ENCODE measurements at regions of chrX and their contacts with region 1.

Region 1: GRCh38 chrX:23901805-23902204 is 5.9 kb downstream of the APOO start:
- DNase-seq: peak; percentile 81
- H3K4me3 ChIP-seq: no peak overlapping the region
- H3K27ac ChIP-seq: peak overlapping the region; percentile 90
- H3K4me1 ChIP-seq: peaks cover 48% of the 10 kb centered on the region
- H3K27me3 ChIP-seq: no peaks in the 10 kb centered on the region
- CTCF ChIP-seq: peak; percentile 32 to 51
- POLR2A ChIP-seq: no peak

Region 2: DNA sequence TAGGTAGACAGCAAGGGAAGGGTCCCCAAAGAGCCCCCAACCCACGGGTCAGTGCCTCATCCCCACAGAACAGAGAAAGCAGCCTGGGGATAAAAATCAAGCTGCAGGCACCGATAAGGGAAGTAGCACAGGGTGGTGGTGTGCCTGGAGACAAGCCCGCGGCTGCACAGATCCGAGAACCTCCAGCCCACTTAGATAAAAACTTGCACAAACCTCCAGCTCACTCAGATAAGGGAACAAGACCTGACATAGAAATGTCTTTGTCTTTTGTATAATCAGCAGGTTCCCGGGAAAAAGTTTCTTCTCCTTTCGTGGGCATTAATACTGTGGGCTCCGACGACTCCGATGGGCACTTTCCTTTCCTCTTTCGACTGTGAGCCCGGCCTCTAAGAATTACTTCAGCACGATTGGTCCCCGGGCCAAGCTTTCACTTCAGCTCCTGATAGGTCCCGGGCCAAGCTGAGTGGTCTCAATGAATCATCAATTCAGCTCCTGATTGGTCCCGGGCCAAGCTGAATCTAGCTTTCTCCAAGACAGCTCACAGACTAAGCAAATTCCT is 202.1 kb before region 1 on chrX:
- CTCF ChIA-PET with region 1: interaction called, 85 read pairs
- POLR2A ChIA-PET with region 1: no interaction called
- dilution Hi-C with region 1: no loop called
- intact Hi-C with region 1: loop called (anchors 1 kb)
- DNase-seq: no peak
- H3K4me3 ChIP-seq: no peak overlapping the region
- H3K27ac ChIP-seq: no peak overlapping the region
- H3K4me1 ChIP-seq: no peaks in the 10 kb centered on the region
- H3K27me3 ChIP-seq: no peaks in the 10 kb centered on the region
- CTCF ChIP-seq: no peak
- POLR2A ChIP-seq: no peak

Region 3: GRCh38 chrX:23726191-23726590 is 175.6 kb before region 1 on chrX:
- CTCF ChIA-PET with region 1: interaction called, 11 read pairs
- POLR2A ChIA-PET with region 1: no interaction called
- dilution Hi-C with region 1: no loop called
- intact Hi-C with region 1: no loop called
- DNase-seq: no peak
- H3K4me3 ChIP-seq: no peak overlapping the region
- H3K27ac ChIP-seq: no peak overlapping the region
- H3K4me1 ChIP-seq: peaks cover 10% of the 10 kb centered on the region
- H3K27me3 ChIP-seq: no peaks in the 10 kb centered on the region
- CTCF ChIP-seq: no peak
- POLR2A ChIP-seq: no peak

Region 4: DNA sequence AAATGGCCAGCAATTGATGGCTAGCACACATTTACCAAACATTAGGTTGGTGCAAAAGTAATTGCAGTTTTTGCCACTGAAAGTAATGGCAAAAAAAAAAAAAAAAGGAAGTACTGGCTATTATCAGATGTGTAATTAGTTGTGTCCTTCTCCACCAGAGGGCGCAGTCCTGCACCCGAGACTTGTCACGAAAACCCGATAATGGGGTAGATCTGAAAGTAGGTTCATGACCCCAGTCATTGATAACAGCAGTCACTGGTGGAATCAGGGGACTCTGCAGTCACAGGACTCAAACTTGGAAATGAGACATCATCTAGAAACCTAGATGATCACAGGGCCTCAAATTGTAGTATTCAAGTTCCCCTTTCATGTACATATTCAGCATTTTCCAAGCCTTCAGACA is 145.6 kb before region 1 on chrX:
- CTCF ChIA-PET with region 1: interaction called, 28 read pairs
- POLR2A ChIA-PET with region 1: no interaction called
- dilution Hi-C with region 1: no loop called
- intact Hi-C with region 1: loop called (anchors 1 kb)
- DNase-seq: peak; percentile 54
- H3K4me3 ChIP-seq: no peak overlapping the region
- H3K27ac ChIP-seq: no peak overlapping the region
- H3K4me1 ChIP-seq: no peaks in the 10 kb centered on the region
- H3K27me3 ChIP-seq: no peaks in the 10 kb centered on the region
- CTCF ChIP-seq: peak; percentile 32 to 34
- POLR2A ChIP-seq: no peak

Region 5: DNA sequence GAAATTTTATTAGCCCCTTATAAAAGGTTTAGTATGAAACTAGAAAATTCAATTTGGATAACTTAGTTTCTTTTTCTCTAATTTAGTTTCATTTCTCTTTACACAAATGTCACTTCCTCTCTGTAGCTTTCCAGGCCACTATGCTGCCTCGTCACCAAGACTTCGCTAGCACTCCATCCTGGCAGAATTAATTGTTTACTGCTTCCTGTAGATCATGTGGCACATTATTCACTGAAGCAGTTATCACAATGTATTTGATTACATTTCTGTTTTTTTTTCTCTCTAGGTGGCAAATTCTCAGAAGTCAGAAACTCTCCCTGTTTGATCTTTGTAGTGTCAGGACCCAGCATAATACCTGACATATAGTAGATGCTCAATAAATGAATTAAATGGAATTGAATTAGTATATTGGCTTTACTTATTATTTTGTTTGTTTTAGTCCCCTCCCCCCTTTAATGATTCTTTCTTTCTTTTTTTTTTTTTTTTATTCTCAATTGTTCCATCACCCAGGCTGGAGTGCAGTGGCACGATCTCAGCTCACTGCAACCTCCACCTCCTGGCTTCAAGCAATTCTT is 128.1 kb before region 1 on chrX:
- CTCF ChIA-PET with region 1: interaction called, 18 read pairs
- POLR2A ChIA-PET with region 1: no interaction called
- dilution Hi-C with region 1: no loop called
- intact Hi-C with region 1: no loop called
- DNase-seq: peak; percentile 76
- H3K4me3 ChIP-seq: no peak overlapping the region
- H3K27ac ChIP-seq: peak overlapping the region; percentile 82
- H3K4me1 ChIP-seq: peaks cover 4% of the 10 kb centered on the region
- H3K27me3 ChIP-seq: no peaks in the 10 kb centered on the region
- CTCF ChIP-seq: no peak
- POLR2A ChIP-seq: no peak

Region 6: GRCh38 chrX:23803931-23804381 is 97.8 kb before region 1 on chrX:
- CTCF ChIA-PET with region 1: interaction called, 17 read pairs
- POLR2A ChIA-PET with region 1: interaction called, 3 read pairs
- dilution Hi-C with region 1: no loop called
- intact Hi-C with region 1: loop called (anchors 1 kb)
- DNase-seq: peak; percentile 86
- H3K4me3 ChIP-seq: no peak overlapping the region
- H3K27ac ChIP-seq: peak overlapping the region; percentile 74
- H3K4me1 ChIP-seq: peaks cover 29% of the 10 kb centered on the region
- H3K27me3 ChIP-seq: no peaks in the 10 kb centered on the region
- CTCF ChIP-seq: no peak
- POLR2A ChIP-seq: no peak